Activated T-helper 2 cell treated with anti-CD3 and anti-CD28 coated beads, Interferon-gamma antibody, Interleukin-2, Interleukin-4, amounts not matched to agents 10 μg/mL and 5 μg/mL and 100 μg/mL, durations not matched to agents 14 hours and 24 hours and 36 hours (primary cell): ENCODE measurements at regions of chr6 and their contacts with region 1.

Region 1: GRCh38 chr6:89638320-89639195 is at the start of gene LYRM2:
- DNase-seq: peak; percentile 89
- H3K4me3 Mint-ChIP-seq: peak within 1 kb of the TSS; percentile 84
- H3K27ac Mint-ChIP-seq: peak within 1 kb of the TSS; percentile 94
- H3K4me1 Mint-ChIP-seq: peaks cover 16% of the 10 kb centered on the region
- H3K27me3 Mint-ChIP-seq: no peaks in the 10 kb centered on the region
- total RNA-seq, gene LYRM2: 28.7 and 30.0 TPM in 2 replicates

Region 2: DNA sequence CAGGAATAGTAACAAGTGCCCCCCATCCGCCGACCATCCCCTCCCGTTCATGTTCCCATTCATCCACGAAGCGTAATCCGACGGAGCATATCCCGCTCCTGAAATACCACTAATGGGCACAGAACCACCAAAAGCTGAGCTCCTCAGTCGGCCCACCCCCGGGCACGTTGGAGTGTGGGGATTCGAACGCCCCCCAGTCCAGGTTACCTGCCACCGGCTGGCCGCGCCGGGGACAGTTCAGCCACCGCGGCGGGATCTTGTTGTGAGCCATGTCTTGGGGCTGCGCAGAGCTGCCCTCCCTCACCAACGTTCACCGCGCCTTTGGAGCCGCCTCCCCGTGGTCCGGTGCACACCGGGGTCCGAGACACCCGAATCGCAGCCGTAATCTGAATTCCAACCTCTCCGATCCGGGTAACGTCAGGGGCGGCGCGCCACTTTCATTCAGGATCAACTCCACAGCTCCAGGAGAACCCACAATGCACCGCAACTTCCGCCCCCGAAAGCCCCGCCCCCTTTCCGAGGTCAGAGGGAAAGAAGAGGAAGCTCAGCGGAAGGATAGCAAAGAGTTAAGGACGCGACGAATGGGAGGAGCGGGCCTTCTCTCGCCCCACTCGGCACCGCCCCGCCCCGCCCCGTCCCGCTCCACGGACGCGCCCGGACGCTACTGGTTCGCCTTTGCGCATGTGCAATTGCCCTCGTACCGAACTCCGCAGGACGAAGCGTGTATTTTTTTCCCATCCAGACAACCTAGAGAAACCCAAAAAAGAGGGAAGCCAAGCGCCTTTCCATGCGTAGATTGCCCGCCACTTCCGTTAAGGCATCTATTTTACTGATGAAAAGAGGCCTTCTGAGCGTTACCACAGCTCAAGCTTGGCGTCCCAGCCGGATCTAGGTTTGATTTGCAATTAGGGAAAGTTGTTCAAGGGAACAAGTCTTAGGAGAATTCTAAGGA is 675.1 kb before region 1 on chr6 and contains the start of gene RNGTT:
- intact Hi-C with region 1: loop called (anchors 1 kb)
- DNase-seq: peak; percentile 95
- H3K4me3 Mint-ChIP-seq: peak within 1 kb of the TSS; percentile 97
- H3K27ac Mint-ChIP-seq: peak within 1 kb of the TSS; percentile 83
- H3K4me1 Mint-ChIP-seq: peaks cover 30% of the 10 kb centered on the region
- H3K27me3 Mint-ChIP-seq: peaks cover 2% of the 10 kb centered on the region
- total RNA-seq, gene RNGTT: 23.5 and 24.2 TPM in 2 replicates

Region 3: DNA sequence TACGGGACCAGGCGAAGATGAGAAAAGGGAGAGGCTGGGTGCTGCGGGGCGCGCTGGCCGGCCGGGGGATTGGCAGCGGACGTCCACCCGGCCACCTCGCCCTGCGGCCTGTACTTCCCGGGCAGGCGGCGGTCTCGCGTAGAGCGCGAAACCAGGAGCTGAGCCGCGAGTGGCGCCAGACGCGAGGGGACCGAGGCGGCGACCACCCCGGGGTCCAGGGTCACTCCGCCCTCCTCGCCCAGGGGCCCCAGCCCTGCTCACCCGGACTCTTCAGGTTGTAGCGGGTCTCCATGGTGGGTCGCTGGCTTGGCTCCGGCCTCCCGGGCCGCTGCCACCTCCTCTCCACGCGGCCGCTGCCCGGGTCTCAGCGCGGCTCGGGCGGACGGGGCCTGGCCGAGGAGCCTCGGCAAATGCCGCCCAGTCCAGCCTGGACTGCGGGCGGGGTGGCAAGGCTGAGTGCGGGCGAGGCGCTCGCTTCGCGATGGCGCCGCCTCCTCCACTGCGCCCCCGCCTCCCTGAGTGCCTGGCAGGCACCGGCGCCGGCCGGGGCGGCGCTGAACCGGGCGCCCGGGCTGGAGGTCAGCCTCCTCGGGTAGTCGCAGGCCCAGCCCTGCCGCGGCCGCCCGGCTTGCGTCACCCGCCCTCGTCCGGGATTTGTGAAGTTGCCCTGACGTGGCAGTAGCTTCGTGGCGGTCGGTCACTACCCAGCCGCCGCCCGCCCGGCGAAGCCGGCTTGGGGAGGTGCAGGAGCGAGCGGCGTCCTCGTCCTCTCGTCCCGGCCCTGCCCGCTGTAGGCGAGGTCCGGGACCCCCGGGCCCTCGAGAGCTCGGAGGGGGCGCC is 286.1 kb before region 1 on chr6 and contains the start of gene UBE2J1:
- intact Hi-C with region 1: loop called (anchors 10 kb)
- DNase-seq: peak; percentile 74
- H3K4me3 Mint-ChIP-seq: peak within 1 kb of the TSS; percentile 96
- H3K27ac Mint-ChIP-seq: peak within 1 kb of the TSS; percentile 92
- H3K4me1 Mint-ChIP-seq: peaks cover 66% of the 10 kb centered on the region
- H3K27me3 Mint-ChIP-seq: no peaks in the 10 kb centered on the region
- total RNA-seq, gene UBE2J1: 34.4 and 34.8 TPM in 2 replicates

Region 4: DNA sequence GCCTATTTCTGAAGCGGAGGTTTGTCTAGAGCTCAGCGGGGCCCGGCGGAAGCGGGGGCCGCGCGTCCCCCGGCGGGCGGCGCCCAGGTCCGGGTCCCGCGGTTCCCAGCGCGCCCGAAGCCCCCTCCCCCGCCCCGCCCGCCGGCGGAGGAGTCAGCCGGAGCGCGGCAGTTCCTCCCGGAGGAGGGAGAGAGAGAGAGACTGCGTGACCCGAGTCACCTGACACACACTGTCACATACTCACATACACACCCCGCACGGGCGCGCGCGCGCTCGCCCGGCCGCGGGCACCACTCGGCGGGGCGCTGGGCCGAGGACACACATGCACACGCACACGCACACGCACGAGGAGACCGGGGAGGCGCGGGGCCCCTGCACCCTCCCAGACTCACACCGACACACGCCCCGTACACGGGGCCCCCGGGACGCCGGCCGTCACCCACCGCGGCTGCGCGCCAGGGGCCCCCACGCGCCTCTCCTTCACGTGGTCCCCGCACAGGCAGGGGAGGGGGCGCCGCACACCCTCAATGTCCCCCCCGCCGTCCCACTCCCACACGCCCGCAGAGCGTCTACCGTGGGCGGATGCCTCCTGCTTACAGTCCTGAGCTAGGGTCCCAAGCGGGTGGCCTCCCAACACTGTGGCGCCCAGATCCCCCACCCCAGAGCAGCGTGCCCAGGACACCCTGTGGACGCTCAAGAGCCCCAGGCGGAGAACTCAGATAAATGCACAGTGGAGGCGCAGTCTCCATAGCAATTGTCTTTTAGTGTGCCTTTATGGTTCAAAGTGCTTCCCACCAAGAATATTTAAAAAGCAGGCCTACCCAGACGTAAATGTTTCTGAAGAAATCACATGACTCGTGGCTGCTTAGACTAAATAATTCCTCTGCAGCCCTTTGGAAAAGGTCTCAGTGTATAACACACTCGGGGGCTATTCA is 226.2 kb before region 1 on chr6 and contains the start of gene RRAGD:
- intact Hi-C with region 1: loop called (anchors 1 kb)
- DNase-seq: peak; percentile 53
- H3K4me3 Mint-ChIP-seq: peak within 1 kb of the TSS; percentile 93
- H3K27ac Mint-ChIP-seq: peak within 1 kb of the TSS; percentile 86
- H3K4me1 Mint-ChIP-seq: peaks cover 16% of the 10 kb centered on the region
- H3K27me3 Mint-ChIP-seq: peaks cover 57% of the 10 kb centered on the region
- total RNA-seq, gene RRAGD: 6.3 and 7.2 TPM in 2 replicates

Region 5: GRCh38 chr6:89432875-89433251 is 205.7 kb before region 1 on chr6 and contains the start of gene ANKRD6:
- intact Hi-C with region 1: loop called (anchors 1 kb)
- DNase-seq: peak; percentile 73
- H3K4me3 Mint-ChIP-seq: peak within 1 kb of the TSS; percentile 79
- H3K27ac Mint-ChIP-seq: peak within 1 kb of the TSS; percentile 20
- H3K4me1 Mint-ChIP-seq: peaks cover 14% of the 10 kb centered on the region
- H3K27me3 Mint-ChIP-seq: peaks cover 55% of the 10 kb centered on the region
- total RNA-seq, gene ANKRD6: 2.2 TPM in 2 replicates

Region 6: DNA sequence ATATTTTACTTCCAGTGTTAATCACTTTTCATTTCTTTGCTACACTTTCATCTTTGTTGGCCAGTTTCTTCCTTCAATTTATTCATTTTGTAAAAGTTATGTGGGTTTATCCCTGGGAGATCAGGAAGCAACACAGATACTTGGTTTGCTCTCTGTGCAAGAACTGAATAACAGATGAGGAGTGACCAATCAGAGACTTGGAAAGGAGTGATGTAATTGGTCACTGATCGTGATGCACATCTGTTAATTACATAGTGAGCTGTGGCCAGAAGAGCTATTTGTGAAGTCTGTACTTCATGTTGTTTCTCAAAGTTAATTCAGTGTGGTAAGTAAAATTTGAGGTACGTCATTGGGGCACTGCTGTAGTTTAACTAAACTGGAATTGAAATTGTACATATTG is 184.3 kb before region 1 on chr6:
- intact Hi-C with region 1: no loop called
- DNase-seq: no peak
- H3K4me3 Mint-ChIP-seq: no peak overlapping the region
- H3K27ac Mint-ChIP-seq: no peak overlapping the region
- H3K4me1 Mint-ChIP-seq: no peaks in the 10 kb centered on the region
- H3K27me3 Mint-ChIP-seq: peaks cover 6% of the 10 kb centered on the region

Region 7: GRCh38 chr6:89689732-89690131 is 51.2 kb after region 1 on chr6:
- intact Hi-C with region 1: no loop called
- DNase-seq: no peak
- H3K4me3 Mint-ChIP-seq: no peak overlapping the region
- H3K27ac Mint-ChIP-seq: peak overlapping the region; percentile 8
- H3K4me1 Mint-ChIP-seq: peaks cover 5% of the 10 kb centered on the region
- H3K27me3 Mint-ChIP-seq: no peaks in the 10 kb centered on the region

Region 8: DNA sequence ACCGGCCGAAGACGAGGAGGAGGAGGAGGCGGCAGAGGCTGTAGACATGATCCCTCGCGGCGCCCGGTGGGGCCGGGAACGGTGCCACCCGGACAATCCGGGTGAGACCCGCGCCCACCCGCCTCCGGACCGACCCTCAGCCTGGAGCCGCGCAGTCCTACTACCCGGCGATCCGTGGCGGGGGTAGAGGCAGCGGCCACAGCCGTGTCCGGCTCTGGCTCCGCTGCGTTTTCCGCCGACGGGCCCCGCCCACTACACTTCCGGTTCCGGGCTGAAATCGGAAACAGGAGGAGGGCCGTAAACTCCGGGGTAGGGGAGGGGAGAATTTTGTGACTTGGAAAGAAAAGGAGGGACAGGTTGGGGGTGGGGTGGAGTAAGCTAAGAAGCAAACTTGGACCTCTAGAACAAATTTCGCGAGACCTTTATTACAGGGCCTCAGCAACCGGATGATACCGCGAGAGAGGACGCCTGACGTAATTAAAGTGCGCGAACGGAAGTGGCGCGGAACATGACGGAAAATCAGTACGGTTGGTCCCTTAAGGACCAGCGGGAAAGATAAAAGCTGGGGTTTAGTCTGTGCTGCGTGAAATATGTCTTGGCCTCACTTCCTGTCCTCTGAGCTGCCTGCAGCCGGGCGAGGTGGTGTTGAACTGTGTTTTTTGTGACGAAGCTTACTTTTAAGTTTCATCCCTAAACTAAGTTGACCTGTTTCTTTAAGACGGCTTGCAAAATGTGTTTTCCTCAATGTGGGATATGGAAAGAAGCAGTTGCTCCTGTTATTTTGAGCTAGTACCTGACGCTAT is 948.5 kb after region 1 on chr6 and contains the start of gene MAP3K7:
- intact Hi-C with region 1: loop called (anchors 1 kb)
- DNase-seq: peak; percentile 93
- H3K4me3 Mint-ChIP-seq: peak within 1 kb of the TSS; percentile 94
- H3K27ac Mint-ChIP-seq: peak within 1 kb of the TSS; percentile 95
- H3K4me1 Mint-ChIP-seq: peaks cover 42% of the 10 kb centered on the region
- H3K27me3 Mint-ChIP-seq: peaks cover 20% of the 10 kb centered on the region
- total RNA-seq, gene MAP3K7: 30.5 and 32.1 TPM in 2 replicates